ENCODE measurements at regions of chr3 and their contacts with region 1.

Region 1: DNA sequence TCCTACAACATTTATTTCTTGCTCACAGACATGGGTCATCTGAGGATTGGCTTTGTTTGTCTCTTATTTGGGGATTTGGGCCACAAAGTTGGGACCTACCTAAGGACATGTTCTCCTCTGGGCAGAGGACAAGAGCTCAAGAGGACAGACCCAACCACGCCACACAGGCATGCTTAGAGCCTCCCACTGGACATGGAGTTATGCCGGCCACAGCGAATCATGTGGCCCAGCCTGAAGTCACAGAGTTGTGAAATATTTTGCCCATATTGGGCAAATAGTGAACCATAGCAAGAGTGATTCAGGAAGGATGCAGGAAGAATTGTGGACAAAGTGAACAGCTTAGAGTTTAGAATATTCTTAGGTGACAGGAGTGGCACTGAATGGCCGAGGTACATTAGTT is 9.9 kb downstream of the TRAK1 start:
- DNase-seq: peak in 1 of 2 experiments; percentile 21
- ATAC-seq: peak; percentile 47 to 54; a peak in 3 of 6 replicates
- H3K4me3 ChIP-seq: no peak overlapping the region
- H3K27ac ChIP-seq: no peak overlapping the region
- H3K4me1 ChIP-seq: peaks cover 15% of the 10 kb centered on the region; the same call in 1 of the 3 replicates
- CTCF ChIP-seq: no peak
- EP300 ChIP-seq: no peak
- POLR2A ChIP-seq: no peak
- RAD21 ChIP-seq: no peak

Region 2: DNA sequence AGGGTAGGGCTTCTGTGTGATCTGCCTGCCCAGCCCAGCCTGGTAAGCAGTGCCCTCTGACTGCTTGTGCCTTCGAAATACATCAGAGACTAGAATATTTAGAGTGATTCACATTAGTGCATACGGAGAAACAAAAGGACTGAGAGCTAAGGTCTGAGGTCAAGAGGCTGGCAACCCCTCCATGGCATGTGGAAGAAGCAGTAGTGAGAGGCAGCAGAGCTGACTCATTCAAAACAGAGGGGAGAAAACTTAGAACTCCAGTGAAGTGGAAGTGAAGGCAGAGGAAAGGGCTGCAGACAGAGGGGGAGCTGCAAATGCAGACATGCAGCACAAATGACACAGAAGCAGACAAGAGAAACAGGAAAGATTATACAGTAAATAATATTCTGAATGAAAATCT is 200.8 kb before region 1 on chr3:
- CTCF ChIA-PET with region 1: interaction called, 37 read pairs
- POLR2A ChIA-PET with region 1: no interaction called
- DNase-seq: peak in 1 of 2 experiments; percentile 13
- ATAC-seq: no peak
- H3K4me3 ChIP-seq: no peak overlapping the region
- H3K27ac ChIP-seq: 0 out of 6 replicates have a peak overlapping the region, but pooled peaks of 1 of the 2 experiments have one; percentile 2
- H3K4me1 ChIP-seq: no peaks in the 10 kb centered on the region
- CTCF ChIP-seq: no peak
- EP300 ChIP-seq: no peak
- POLR2A ChIP-seq: no peak
- RAD21 ChIP-seq: no peak

Region 3: GRCh38 chr3:41997702-41998550 is 103.1 kb before region 1 on chr3:
- CTCF ChIA-PET with region 1: interaction called, 14 read pairs
- POLR2A ChIA-PET with region 1: no interaction called
- DNase-seq: no peak
- ATAC-seq: peak; percentile 56 to 75; a peak in 4 of 6 replicates
- H3K4me3 ChIP-seq: no peak overlapping the region
- H3K27ac ChIP-seq: no peak overlapping the region
- H3K4me1 ChIP-seq: no peaks in the 10 kb centered on the region
- CTCF ChIP-seq: no peak
- EP300 ChIP-seq: no peak
- POLR2A ChIP-seq: no peak
- RAD21 ChIP-seq: peak in 1 of 2 experiments; percentile 14; a peak in 1 of 5 replicates

Region 4: DNA sequence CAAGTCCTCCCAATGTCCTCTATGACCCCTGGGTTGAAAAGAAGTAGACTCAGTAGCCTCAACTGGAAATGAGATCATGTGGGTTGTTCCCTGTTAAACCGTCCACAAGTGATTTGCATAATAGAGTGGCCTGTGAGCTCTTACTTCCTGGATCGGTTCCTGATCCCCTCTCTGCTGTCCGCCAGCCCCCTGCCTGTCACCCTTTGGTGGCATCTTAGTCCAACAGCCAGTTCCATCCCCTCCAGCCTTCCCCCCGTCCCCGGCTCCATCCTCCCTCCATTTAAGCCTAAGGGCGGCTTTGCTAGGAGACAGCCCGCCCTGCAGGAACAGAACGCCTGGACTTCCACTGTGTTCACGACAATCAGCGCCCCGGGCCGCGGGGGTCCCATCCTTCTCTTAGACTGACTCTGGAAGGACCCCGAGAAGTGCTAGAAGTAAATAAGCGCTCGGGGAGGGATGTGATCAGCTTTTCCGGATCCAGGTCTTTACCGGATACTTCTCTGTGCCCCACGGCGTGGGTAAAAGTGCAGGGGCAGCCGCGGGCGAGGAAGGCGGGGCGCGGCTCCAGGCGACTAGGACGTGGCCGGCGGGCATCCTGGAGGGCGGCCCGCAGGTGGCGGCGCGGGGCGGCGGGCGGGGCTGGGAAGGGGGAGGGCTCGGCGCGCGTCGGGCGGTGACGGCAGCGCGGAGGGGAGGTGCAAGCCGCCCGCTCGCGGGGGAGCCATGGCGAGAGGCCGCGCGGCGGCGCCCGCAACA is 87.9 kb before region 1 on chr3:
- CTCF ChIA-PET with region 1: interaction called, 14 read pairs
- POLR2A ChIA-PET with region 1: no interaction called
- DNase-seq: peak; percentile 50 to 56
- ATAC-seq: peak; percentile 89 to 91
- H3K4me3 ChIP-seq: peak overlapping the region; percentile 98
- H3K27ac ChIP-seq: peak overlapping the region; percentile 96 to 98
- H3K4me1 ChIP-seq: peaks cover 11% of the 10 kb centered on the region
- CTCF ChIP-seq: no peak; the same call in 2 of the 3 replicates
- EP300 ChIP-seq: no peak
- POLR2A ChIP-seq: peak; percentile 55
- RAD21 ChIP-seq: no peak; a peak in 1 of 5 replicates

Region 5: GRCh38 chr3:42036483-42036823 is 64.6 kb before region 1 on chr3:
- CTCF ChIA-PET with region 1: interaction called, 18 read pairs
- POLR2A ChIA-PET with region 1: no interaction called
- DNase-seq: peak; percentile 53 to 62
- ATAC-seq: peak; percentile 84 to 85
- H3K4me3 ChIP-seq: no peak overlapping the region
- H3K27ac ChIP-seq: peak overlapping the region; percentile 71 to 81
- H3K4me1 ChIP-seq: peaks cover 55% of the 10 kb centered on the region
- CTCF ChIP-seq: no peak
- EP300 ChIP-seq: no peak
- POLR2A ChIP-seq: no peak
- RAD21 ChIP-seq: no peak

Region 6: DNA sequence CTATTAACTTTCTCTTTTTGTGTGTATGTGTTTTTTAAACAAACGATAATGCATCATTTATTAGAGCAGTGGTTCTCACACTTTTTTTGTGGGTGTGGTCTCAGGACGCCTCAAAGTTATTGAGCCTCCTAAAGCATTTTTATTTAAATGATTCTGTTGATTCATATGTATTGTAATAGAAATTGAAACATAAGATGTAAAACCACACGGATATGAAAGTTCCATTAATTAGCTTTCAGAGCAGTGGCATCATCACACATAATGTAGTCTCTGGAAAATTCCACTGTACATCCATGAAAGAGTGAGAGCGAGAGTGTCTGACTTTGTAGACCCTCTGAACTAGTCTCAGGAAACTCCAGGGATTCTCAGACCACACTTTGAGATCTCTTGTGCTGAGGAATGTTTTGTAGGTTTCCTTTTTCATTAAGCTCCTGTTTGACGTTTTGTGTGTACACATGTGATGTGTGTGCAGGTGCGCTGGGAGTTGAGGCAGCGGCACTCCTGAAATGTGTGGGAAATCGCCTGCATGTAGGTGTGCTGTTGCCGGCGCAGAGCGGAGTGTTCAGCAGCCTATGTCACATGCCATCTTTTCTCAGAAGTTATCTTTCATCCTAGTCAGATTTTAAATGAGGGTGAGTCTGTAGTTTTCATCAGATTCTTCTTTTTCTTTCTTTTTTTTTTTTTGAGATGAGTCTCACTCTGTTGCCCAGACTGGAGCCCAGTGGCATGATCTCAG is 15.2 kb before region 1 on chr3:
- CTCF ChIA-PET with region 1: interaction called, 24 read pairs
- POLR2A ChIA-PET with region 1: no interaction called
- DNase-seq: no peak
- ATAC-seq: no peak
- H3K4me3 ChIP-seq: no peak overlapping the region
- H3K27ac ChIP-seq: no peak overlapping the region
- H3K4me1 ChIP-seq: peaks cover 11% of the 10 kb centered on the region
- CTCF ChIP-seq: no peak
- EP300 ChIP-seq: no peak
- POLR2A ChIP-seq: no peak
- RAD21 ChIP-seq: no peak

Region 7: DNA sequence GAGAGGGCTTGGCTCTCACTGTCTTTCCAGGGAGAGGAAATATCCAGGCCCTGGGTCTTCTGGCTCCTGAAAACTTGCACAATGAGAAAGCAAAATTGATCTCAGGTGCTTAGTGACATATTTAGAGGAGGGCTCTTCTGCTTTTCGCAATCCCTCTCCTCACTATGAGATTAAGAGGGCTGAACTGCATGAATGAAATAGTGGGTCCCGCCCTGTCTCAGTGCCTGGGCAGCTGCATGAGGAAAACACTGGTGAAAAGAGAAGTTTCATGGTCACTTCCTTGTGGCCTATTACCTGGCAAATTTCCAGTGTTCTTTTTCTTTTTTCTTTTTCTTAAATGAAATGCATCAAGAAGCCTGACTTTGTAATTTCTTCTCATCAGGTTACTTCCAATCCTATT is 63.6 kb after region 1 on chr3:
- CTCF ChIA-PET with region 1: no interaction called
- POLR2A ChIA-PET with region 1: no interaction called
- DNase-seq: no peak
- ATAC-seq: no peak
- H3K4me3 ChIP-seq: no peak overlapping the region
- H3K27ac ChIP-seq: peak overlapping the region in 1 of 2 experiments; percentile 50; a peak in 1 of 6 replicates
- H3K4me1 ChIP-seq: peaks cover 31% of the 10 kb centered on the region
- CTCF ChIP-seq: no peak
- EP300 ChIP-seq: no peak
- POLR2A ChIP-seq: no peak
- RAD21 ChIP-seq: no peak

Measured in A549 (cell line).